ENCODE measurements at regions of chr1 and their contacts with region 1.

Region 1: GRCh38 chr1:206590025-206590758 is 22.1 kb downstream of the EIF2D start:
- DNase-seq: peak; percentile 83
- H3K4me3 Mint-ChIP-seq: peak overlapping the region; percentile 50
- H3K27ac Mint-ChIP-seq: peak overlapping the region; percentile 99
- H3K4me1 Mint-ChIP-seq: peaks cover 78% of the 10 kb centered on the region
- H3K27me3 Mint-ChIP-seq: no peaks in the 10 kb centered on the region

Region 2: DNA sequence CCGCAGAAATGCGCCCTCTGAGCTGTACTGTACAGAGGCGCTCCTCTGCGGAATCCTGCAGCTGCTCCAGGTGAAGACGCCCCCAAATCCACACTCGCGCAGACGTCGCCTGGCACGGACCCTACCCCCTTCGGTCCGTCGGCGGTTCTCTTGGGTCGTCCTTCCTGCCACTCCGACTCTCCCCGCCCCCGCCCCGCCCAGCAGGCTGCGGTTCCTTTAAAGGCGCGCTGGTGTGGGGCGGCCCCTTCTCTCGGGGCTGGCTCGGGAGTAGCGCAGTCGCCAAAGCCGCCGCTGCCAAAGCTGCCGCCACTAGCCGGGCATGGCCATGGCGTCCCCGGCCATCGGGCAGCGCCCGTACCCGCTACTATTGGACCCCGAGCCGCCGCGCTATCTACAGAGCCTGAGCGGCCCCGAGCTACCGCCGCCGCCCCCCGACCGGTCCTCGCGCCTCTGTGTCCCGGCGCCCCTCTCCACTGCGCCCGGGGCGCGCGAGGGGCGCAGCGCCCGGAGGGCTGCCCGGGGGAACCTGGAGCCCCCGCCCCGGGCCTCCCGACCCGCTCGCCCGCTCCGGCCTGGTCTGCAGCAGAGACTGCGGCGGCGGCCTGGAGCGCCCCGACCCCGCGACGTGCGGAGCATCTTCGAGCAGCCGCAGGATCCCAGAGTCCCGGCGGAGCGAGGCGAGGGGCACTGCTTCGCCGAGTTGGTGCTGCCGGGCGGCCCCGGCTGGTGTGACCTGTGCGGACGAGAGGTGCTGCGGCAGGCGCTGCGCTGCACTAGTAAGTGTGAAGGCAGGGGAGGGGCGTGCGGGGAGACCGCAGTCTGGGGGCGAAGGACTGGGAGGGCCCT is 82.7 kb before region 1 on chr1 and contains the start of gene RASSF5:
- CTCF ChIA-PET with region 1: interaction called, 5 read pairs
- POLR2A ChIA-PET with region 1: interaction called, 3 read pairs
- intact Hi-C with region 1: loop called (anchors 1 kb)
- DNase-seq: peak; percentile 90
- H3K4me3 Mint-ChIP-seq: peak within 1 kb of the TSS; percentile 71
- H3K27ac Mint-ChIP-seq: peak within 1 kb of the TSS; percentile 30
- H3K4me1 Mint-ChIP-seq: peaks cover 47% of the 10 kb centered on the region
- H3K27me3 Mint-ChIP-seq: peaks cover 26% of the 10 kb centered on the region
- total RNA-seq, gene RASSF5: 203 TPM

Region 3: DNA sequence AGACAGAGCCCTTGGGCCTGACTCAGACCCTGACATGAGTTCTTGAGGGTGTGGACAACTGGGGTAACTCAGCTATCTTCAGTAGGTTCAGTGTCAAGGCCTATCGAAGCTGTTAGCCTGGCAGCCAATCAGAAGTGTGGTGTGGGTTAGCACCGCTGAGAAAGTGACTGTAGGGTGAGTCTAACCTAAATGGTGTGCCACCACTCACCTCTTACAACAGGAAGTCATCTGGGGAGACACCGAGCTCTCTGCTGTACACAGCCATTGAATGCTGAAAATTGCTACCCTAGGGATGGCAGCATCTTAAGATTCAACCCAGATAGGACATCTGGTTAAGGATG is 38.2 kb before region 1 on chr1:
- CTCF ChIA-PET with region 1: interaction called, 588 read pairs
- POLR2A ChIA-PET with region 1: interaction called, 546 read pairs
- intact Hi-C with region 1: loop called (anchors 1 kb)
- DNase-seq: peak; percentile 92
- H3K4me3 Mint-ChIP-seq: peak overlapping the region; percentile 70
- H3K27ac Mint-ChIP-seq: peak overlapping the region; percentile 91
- H3K4me1 Mint-ChIP-seq: peaks cover 53% of the 10 kb centered on the region
- H3K27me3 Mint-ChIP-seq: no peaks in the 10 kb centered on the region

Region 4: GRCh38 chr1:206563367-206564207 is 26.6 kb before region 1 on chr1:
- CTCF ChIA-PET with region 1: interaction called, 588 read pairs
- POLR2A ChIA-PET with region 1: interaction called, 546 read pairs
- intact Hi-C with region 1: loop called (anchors 1 kb)
- DNase-seq: no peak
- H3K4me3 Mint-ChIP-seq: peak overlapping the region; percentile 72
- H3K27ac Mint-ChIP-seq: peak overlapping the region; percentile 99
- H3K4me1 Mint-ChIP-seq: peaks cover 86% of the 10 kb centered on the region
- H3K27me3 Mint-ChIP-seq: no peaks in the 10 kb centered on the region

Region 5: DNA sequence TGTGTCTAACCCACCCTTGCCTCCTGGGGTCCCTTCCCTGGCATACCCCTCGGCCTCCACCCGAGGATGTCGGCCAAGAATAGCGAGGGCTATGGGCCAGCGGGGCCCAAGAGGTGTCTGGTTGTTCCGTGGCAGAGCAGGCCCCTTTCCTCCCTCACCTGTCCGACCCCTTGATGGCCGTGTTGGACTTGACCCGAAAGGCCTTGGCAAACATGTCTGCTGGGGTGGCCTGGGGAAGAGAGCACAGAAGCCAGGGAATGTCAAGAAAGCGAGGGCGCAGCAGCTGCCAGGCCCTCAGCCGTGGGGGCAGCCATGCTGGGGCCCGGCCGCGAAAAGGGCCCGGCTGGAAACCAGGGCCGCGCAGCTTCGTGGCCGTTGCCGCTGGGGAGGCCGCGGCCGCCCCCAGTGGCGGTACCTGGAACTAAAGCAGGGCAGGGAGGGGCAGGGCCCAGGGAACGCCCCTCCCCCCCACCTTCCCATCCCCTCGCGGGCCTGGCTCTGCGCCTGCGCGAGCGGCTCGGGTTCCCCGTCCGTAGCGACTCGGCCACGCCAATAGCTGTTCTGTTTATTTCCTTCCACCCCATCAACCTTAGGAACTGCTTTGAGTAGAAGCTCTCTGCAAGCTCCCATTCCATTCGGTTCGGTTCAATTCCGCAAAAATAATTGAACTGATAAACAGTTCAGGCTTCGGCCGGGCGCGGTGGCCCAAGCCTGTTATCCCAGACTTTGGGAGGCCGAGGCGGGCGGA is 22.1 kb after region 1 on chr1 and contains the start of gene EIF2D:
- CTCF ChIA-PET with region 1: interaction called, 19 read pairs
- POLR2A ChIA-PET with region 1: interaction called, 6 read pairs
- intact Hi-C with region 1: loop called (anchors 1 kb)
- DNase-seq: peak; percentile 96
- H3K4me3 Mint-ChIP-seq: peak within 1 kb of the TSS; percentile 96
- H3K27ac Mint-ChIP-seq: peak within 1 kb of the TSS; percentile 90
- H3K4me1 Mint-ChIP-seq: peaks cover 32% of the 10 kb centered on the region
- H3K27me3 Mint-ChIP-seq: no peaks in the 10 kb centered on the region
- total RNA-seq, gene EIF2D: 84.6 to 87.5 TPM

Region 6: DNA sequence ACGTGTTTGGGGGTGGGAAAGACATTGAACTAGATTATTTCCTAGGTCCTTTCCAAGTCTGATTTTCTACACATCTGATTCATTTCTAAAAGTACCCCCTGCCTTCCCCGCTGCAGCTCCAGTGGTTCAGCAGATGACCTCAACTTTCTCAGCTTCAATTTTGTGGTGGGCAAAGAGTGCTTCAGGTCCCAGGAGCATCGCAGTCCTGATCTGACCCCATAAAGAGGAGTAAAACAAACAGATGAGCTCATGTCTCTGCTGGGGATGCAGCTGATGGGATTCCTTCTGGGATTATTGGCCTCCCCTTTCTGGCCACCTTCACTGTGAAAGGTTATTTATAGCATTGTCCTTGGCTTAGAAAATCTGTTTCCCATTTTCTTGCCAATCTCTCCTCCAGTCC is 1991.0 kb after region 1 on chr1:
- CTCF ChIA-PET with region 1: no interaction called
- POLR2A ChIA-PET with region 1: no interaction called
- intact Hi-C with region 1: no loop called
- DNase-seq: no peak
- H3K4me3 Mint-ChIP-seq: no peak overlapping the region
- H3K27ac Mint-ChIP-seq: no peak overlapping the region
- H3K4me1 Mint-ChIP-seq: no peaks in the 10 kb centered on the region
- H3K27me3 Mint-ChIP-seq: no peaks in the 10 kb centered on the region

Measured in activated CD4-positive, alpha-beta memory T cell treated with anti-CD3 and anti-CD28 coated beads for 36 hours (primary cell).